GM12878 (cell line): ENCODE measurements at regions of chr4 and their contacts with region 1.

Region 1: GRCh38 chr4:182089326-182089725 is 153.9 kb upstream of the TENM3 start:
- DNase-seq: no peak
- ATAC-seq: peak; percentile 33
- H3K4me3 ChIP-seq: no peak overlapping the region
- H3K27ac ChIP-seq: no peak overlapping the region
- H3K4me1 ChIP-seq: no peaks in the 10 kb centered on the region
- H3K27me3 ChIP-seq: no peaks in the 10 kb centered on the region
- CTCF ChIP-seq: peak in 1 of 3 experiments; percentile 23; a peak in 2 of 6 replicates
- EP300 ChIP-seq: no peak
- POLR2A ChIP-seq: no peak
- RAD21 ChIP-seq: peak; percentile 30

Region 2: DNA sequence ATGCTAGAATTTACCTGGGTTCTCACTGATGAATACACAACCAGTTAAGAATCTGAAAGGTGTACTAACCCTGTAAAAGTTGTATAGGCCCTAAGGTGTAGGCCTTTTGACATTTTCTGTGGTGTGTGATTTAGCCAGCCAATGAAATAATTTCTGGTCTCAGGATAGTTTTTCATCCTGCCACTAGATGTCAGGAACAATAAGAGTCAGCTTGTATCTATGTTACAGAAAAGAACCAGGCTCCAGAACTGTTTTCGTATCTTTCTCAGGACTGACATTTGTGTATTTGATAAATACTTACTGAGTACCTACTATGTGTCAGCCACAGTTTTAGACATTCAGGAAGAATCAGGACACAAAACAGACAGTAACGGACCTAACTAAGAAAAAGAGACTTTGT is 519.8 kb before region 1 on chr4:
- CTCF ChIA-PET with region 1: no interaction called
- POLR2A ChIA-PET with region 1: no interaction called
- RAD21 ChIA-PET with region 1: no interaction called
- SMC1A ChIA-PET with region 1: no interaction called
- in situ Hi-C with region 1: no loop called
- intact Hi-C with region 1: loop called (anchors 5 kb)
- DNase-seq: no peak
- ATAC-seq: peak; percentile 89
- H3K4me3 ChIP-seq: no peak overlapping the region
- H3K27ac ChIP-seq: no peak overlapping the region
- H3K4me1 ChIP-seq: no peaks in the 10 kb centered on the region
- H3K27me3 ChIP-seq: no peaks in the 10 kb centered on the region
- CTCF ChIP-seq: peak; percentile 40 to 54 (median 41); a peak in 5 of 6 replicates
- EP300 ChIP-seq: no peak
- POLR2A ChIP-seq: no peak
- RAD21 ChIP-seq: peak; percentile 57